Activated CD4-positive, alpha-beta memory T cell treated with anti-CD3 and anti-CD28 coated beads for 36 hours (primary cell): ENCODE measurements at regions of chr1 and their contacts with region 1.

Region 1: DNA sequence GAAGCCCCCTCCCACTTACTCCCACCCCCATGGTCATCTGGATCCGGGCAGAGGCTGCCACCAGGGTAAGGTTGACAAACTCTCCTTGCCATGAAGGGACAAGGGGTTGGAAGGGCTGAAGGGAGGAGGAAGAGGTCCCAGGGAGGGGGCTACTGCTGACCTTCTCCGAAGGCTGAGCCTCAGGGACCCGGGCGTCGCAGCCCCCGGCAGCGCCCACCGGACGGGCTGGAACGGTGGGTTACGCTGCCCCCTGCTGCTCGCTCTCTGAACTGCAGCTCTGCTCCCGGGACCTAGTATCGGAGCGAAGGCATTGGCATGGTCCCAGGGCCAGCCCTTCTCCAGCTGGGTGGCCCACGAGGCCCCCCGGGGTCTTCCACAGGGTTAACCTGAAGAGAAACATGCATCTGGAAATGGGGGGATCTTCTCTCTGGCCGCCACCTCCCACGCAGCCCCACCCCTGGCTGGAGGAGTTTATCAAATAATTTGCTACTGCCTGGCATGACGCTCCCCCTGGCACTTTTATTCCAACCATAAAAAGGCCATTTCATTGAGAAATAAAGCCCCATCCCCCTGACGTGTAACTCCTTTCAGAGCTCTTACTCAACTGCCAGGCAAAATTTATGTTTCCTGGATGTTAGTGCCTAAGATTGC is 70.4 kb upstream of the TARDBP start:
- DNase-seq: peak; percentile 70
- H3K4me3 Mint-ChIP-seq: no peak overlapping the region
- H3K27ac Mint-ChIP-seq: no peak overlapping the region
- H3K4me1 Mint-ChIP-seq: peaks cover 26% of the 10 kb centered on the region
- H3K27me3 Mint-ChIP-seq: peaks cover 39% of the 10 kb centered on the region

Region 2: DNA sequence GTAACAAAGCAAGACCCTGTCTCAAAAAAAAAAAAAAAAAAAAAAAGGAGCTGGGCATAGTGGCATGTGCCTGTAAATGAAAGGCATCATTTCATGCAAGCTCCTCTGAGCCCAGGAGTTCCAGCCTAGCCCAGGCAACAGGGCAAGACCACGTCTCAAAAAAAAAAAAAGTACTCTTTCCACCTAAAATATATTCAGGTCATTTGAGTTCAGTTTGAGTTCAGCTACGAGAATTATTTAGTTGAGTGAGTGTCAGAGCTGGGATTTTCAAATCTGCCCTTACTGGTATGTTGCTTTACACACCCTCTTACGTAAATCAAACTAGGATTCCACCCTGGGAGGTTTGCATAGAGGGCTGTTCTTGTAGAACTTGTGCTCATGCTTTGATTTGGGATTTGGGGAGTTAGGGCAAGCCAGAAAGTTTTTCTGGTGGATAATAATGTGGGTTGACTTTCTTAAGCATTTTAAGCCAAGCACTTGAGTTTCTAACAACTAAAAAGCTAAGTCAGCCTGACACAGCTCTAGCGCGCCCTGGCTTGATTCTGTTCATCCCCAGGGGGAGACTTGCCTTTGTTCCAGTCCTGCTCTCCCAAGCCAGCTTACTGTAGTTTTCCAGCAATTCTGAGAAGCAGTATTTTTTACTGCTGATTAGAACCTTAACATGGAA is 554.5 kb before region 1 on chr1:
- CTCF ChIA-PET with region 1: no interaction called
- POLR2A ChIA-PET with region 1: no interaction called
- intact Hi-C with region 1: no loop called
- DNase-seq: no peak
- H3K4me3 Mint-ChIP-seq: no peak overlapping the region
- H3K27ac Mint-ChIP-seq: no peak overlapping the region
- H3K4me1 Mint-ChIP-seq: peaks cover 3% of the 10 kb centered on the region
- H3K27me3 Mint-ChIP-seq: no peaks in the 10 kb centered on the region

Region 3: GRCh38 chr1:10867138-10867721 is 74.8 kb before region 1 on chr1:
- CTCF ChIA-PET with region 1: interaction called, 5 read pairs
- POLR2A ChIA-PET with region 1: no interaction called
- intact Hi-C with region 1: loop called (anchors 5 kb)
- DNase-seq: peak; percentile 60
- H3K4me3 Mint-ChIP-seq: no peak overlapping the region
- H3K27ac Mint-ChIP-seq: no peak overlapping the region
- H3K4me1 Mint-ChIP-seq: peaks cover 10% of the 10 kb centered on the region
- H3K27me3 Mint-ChIP-seq: peaks cover 60% of the 10 kb centered on the region

Region 4: GRCh38 chr1:10917513-10918454 is 24.2 kb before region 1 on chr1:
- CTCF ChIA-PET with region 1: interaction called, 4 read pairs
- POLR2A ChIA-PET with region 1: no interaction called
- intact Hi-C with region 1: loop called (anchors 2 kb)
- DNase-seq: no peak
- H3K4me3 Mint-ChIP-seq: no peak overlapping the region
- H3K27ac Mint-ChIP-seq: no peak overlapping the region
- H3K4me1 Mint-ChIP-seq: peaks cover 32% of the 10 kb centered on the region
- H3K27me3 Mint-ChIP-seq: peaks cover 32% of the 10 kb centered on the region

Region 5: DNA sequence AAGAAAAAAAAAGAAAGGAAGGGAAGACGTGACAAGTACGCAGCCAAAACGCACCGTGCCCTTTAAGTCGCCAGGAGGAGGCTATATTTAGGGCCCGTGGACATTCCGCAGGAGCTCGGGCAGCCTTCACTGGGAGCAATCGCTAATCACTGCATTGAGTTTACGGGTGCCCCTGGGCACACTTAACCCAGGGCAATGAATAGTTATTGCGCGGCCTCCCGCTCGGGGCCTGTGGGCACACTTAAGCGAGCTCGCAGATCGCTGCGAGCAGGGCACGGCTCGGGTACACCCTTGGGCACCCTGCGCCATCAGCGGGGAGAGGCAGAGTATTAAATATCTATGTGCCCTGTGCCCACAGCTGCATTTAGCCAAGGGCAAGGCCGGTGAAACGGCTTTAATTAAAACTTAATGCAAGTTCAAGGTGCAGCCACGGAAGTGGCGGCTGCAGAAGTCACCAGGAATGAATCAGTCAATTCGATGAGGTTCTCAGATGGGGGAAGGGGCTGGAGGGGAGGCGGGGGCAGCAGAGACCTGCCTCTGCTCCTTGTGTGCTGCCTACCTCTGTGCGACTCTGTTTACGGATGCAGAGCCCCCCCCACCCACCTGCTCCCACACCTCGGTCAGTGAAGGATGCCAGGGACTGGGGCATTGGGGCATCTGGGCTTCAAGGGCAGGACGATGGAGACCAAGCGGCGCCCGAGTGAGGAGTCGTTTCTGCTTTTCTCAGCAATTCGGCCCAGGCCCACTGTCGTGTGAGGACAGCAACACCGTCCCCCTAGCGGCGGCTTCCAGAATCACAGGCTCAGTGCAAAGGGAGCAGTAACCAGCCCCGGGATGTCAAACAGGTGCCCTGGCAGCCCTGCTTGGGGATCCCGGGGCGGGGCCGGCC is 18.6 kb after region 1 on chr1:
- CTCF ChIA-PET with region 1: no interaction called
- POLR2A ChIA-PET with region 1: no interaction called
- intact Hi-C with region 1: no loop called
- DNase-seq: peak; percentile 86
- H3K4me3 Mint-ChIP-seq: no peak overlapping the region
- H3K27ac Mint-ChIP-seq: no peak overlapping the region
- H3K4me1 Mint-ChIP-seq: peaks cover 6% of the 10 kb centered on the region
- H3K27me3 Mint-ChIP-seq: peaks cover 19% of the 10 kb centered on the region